ENCODE measurements at regions of chr14 and their contacts with region 1.

Region 1: DNA sequence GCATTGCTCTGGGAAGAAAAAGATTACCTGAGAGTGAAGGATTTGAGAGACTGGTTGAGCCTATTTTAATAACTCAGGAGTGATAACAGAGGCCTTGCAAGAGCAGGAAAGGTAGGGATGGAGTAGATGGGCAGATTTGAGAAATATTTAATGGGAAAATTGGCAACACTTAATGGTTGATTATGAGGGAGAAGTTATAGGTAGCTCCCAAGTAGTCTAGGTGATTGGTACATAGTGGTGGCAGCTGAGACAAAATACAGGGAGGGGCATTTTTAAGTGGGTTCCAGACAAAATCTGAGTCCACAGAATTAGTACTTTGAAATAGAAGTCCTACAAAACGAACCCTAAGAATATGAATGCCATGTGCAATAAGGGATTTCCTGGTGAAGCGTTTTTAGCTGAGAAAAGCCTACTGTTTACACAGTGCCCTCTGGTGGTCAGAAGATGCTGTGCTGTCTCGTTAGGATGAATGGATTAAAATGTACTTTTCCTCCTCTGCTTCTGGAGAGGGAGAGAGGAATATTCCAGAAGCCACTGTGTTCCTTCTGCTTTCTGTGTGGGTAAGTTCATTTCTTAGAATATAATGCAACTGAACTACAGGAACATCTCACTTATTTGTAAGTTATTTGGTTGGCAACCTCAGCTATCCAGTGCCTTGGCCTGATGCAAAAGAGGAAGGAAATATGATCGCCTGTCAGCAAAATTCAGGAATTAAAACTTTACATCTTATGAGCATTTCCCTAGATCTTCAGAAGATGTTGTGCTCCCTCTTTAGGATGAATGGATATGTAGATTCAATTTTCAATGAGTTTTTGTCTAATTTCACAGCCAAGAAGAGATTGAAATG is 6.5 kb downstream of the ZBTB1 start:
- H3K4me3 ChIP-seq: no peak overlapping the region
- H3K27ac ChIP-seq: no peak overlapping the region
- H3K4me1 ChIP-seq: peaks cover 9% of the 10 kb centered on the region
- CTCF ChIP-seq: 0 out of 2 replicates have a peak, but pooled peaks have one; percentile 28

Region 2: GRCh38 chr14:64465191-64465822 is 45.7 kb before region 1 on chr14 and contains the start of gene AKAP5:
- CTCF ChIA-PET with region 1: interaction called, 11 read pairs
- POLR2A ChIA-PET with region 1: no interaction called
- H3K4me3 ChIP-seq: peak within 1 kb of the TSS; percentile 56
- H3K27ac ChIP-seq: peak within 1 kb of the TSS; percentile 3; the same call in 1 of the 2 replicates
- H3K4me1 ChIP-seq: peaks cover 10% of the 10 kb centered on the region; the same call in 1 of the 2 replicates
- CTCF ChIP-seq: no peak

Region 3: GRCh38 chr14:64531567-64531966 is 20.5 kb after region 1 on chr14:
- CTCF ChIA-PET with region 1: interaction called, 10 read pairs
- POLR2A ChIA-PET with region 1: no interaction called
- H3K4me3 ChIP-seq: no peak overlapping the region
- H3K27ac ChIP-seq: no peak overlapping the region
- H3K4me1 ChIP-seq: no peaks in the 10 kb centered on the region
- CTCF ChIP-seq: no peak

Region 4: GRCh38 chr14:64612021-64612380 is 101.0 kb after region 1 on chr14:
- CTCF ChIA-PET with region 1: no interaction called
- POLR2A ChIA-PET with region 1: no interaction called
- H3K4me3 ChIP-seq: no peak overlapping the region
- H3K27ac ChIP-seq: no peak overlapping the region
- H3K4me1 ChIP-seq: peaks cover 5% of the 10 kb centered on the region
- CTCF ChIP-seq: no peak